Cardiac septum (tissue), 1 donor: ENCODE measurements at regions of chr9 and their contacts with region 1.

Region 1: DNA sequence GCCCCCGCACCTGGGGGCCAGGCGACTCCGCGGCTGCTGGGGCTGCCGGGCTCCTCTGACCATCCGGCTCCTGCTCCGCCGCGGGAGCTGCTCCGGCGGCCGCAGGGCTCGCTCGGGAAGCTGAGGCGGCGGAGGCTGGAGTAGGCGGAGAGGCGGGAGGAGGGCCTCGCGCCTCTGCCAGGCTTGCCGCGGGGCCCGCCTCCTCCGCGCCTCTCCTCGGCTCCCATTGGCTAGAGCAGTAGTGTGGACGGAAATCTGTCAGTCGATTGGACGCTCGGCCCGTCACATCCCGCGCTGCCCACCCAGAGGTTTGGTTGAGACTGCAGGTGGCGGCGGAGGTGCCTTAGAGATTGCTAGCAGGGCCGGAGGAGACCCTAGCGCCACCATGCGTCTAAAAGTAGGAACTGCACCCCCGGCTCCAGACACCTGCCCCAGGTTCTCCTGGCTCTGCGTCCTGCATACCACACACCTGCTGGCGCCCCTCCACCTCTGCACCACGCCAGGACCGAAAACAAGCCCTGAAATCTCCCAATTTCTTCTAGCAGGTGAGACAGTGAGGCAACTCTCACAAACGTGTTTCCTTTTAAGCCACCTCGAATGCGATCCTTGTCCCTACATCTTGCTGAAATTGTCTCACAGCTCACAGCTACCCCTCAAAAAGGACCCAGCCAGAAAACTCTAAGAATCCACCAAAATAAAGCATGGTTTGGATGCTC is at the start of gene SCAI:
- DNase-seq: peak; percentile 100
- total RNA-seq, gene SCAI: 4.8 TPM

Region 2: GRCh38 chr9:124868511-124869465 is 274.7 kb before region 1 on chr9:
- intact Hi-C with region 1: loop called (anchors 5 kb)
- DNase-seq: peak; percentile 95

Region 3: DNA sequence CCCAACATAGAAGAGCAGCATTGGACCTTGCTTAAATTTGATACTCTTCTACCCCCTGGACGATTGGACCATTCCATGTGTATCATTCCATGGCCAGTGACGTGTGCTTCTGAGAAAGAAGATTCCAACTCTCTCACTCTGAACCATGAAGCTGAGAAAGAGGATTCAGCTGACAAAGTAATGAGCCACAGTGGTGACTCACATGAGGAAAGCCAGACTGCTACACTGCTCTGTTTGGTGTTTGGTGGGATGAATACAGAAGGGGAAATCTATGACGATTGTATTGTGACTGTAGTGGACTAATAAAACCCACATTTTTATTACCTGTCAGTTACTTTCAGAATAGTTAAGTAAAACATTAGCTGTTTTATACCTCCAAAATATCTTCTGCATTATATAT is 90.1 kb after region 1 on chr9:
- intact Hi-C with region 1: no loop called
- DNase-seq: no peak